ENCODE measurements at regions of chr12 and their contacts with region 1.

Region 1: GRCh38 chr12:133058203-133059125 is 21.2 kb downstream of the ZNF84 start:
- DNase-seq: peak; percentile 9
- H3K4me3 Mint-ChIP-seq: no peak overlapping the region
- H3K27ac Mint-ChIP-seq: no peak overlapping the region
- H3K4me1 Mint-ChIP-seq: no peaks in the 10 kb centered on the region
- H3K27me3 Mint-ChIP-seq: no peaks in the 10 kb centered on the region
- CTCF ChIP-seq: no peak

Region 2: DNA sequence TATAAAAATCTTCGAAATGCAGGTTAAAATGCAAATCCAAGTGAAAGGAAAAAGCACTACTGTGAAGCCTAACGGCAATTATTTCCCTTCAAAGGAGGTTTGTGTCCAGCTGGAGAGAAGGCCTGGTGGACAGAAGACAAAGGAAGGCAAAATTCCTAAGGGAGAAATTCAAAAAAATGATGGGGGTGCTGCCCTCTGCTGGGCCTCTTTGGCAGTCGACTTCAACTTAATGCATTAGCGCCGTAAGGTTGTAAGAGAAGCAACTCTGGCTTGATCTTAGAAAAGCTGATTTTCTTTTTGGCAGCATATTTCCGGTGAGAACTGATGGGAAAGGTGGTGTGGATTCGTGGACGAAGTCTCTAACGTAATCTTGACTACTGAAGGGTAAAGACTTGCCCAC is 136.8 kb before region 1 on chr12:
- CTCF ChIA-PET with region 1: no interaction called
- POLR2A ChIA-PET with region 1: no interaction called
- intact Hi-C with region 1: no loop called
- DNase-seq: no peak
- H3K4me3 Mint-ChIP-seq: no peak overlapping the region
- H3K27ac Mint-ChIP-seq: no peak overlapping the region
- H3K4me1 Mint-ChIP-seq: no peaks in the 10 kb centered on the region
- H3K27me3 Mint-ChIP-seq: no peaks in the 10 kb centered on the region
- CTCF ChIP-seq: peak; percentile 7

Region 3: DNA sequence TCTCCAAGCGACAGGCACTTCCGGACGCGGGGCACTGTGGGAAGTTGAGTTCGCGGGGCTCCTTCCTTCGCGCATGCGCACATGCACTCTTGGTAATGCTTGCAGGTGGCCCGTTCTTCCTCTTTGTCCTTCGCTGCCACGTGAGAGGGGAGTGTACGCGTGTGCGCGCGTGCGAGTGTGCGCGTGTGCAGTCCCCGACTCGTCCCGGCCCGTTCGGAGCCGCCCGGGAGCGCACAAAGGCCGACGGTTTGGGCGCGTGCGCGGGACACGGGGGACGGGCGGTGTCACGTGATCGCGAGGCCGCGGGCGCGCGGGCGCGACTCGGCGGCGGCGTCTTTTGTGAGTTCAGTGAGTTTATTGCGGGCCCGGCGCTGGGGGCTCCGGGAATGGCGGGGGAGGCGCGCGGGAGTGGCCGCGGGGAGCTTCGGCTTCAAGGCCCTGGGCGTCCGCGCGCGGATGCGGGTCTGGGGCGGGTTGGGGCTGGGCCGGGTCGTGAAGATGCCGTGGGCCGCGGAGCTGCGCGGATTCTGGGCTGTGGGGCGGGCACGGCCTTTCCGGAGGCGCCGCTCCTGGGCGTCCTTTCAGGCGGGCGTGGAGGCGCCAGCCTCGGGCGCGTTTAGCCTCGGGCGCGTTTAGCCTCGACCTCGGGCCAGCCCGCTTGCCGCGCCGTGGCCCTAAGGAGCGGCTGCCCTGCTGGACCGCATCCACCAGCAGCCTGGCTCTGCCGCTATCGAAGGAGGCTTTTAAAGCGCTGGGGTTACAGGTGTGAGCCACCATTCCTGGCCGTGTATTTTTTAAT is 21.1 kb before region 1 on chr12 and contains the start of gene ZNF84:
- CTCF ChIA-PET with region 1: no interaction called
- POLR2A ChIA-PET with region 1: interaction called, 10 read pairs
- intact Hi-C with region 1: no loop called
- DNase-seq: peak; percentile 98
- H3K4me3 Mint-ChIP-seq: peak within 1 kb of the TSS; percentile 87
- H3K27ac Mint-ChIP-seq: peak within 1 kb of the TSS; percentile 93
- H3K4me1 Mint-ChIP-seq: no peaks in the 10 kb centered on the region
- H3K27me3 Mint-ChIP-seq: no peaks in the 10 kb centered on the region
- CTCF ChIP-seq: no peak
- total RNA-seq, gene ZNF84: 24.4 and 30.3 TPM in 2 replicates

Region 4: GRCh38 chr12:133046698-133047097 is 11.8 kb before region 1 on chr12:
- CTCF ChIA-PET with region 1: interaction called, 3 read pairs
- POLR2A ChIA-PET with region 1: interaction called, 18 read pairs
- intact Hi-C with region 1: no loop called
- DNase-seq: no peak
- H3K4me3 Mint-ChIP-seq: no peak overlapping the region
- H3K27ac Mint-ChIP-seq: no peak overlapping the region
- H3K4me1 Mint-ChIP-seq: no peaks in the 10 kb centered on the region
- H3K27me3 Mint-ChIP-seq: no peaks in the 10 kb centered on the region
- CTCF ChIP-seq: no peak